ENCODE measurements at regions of chr12 and their contacts with region 1.

Region 1: DNA sequence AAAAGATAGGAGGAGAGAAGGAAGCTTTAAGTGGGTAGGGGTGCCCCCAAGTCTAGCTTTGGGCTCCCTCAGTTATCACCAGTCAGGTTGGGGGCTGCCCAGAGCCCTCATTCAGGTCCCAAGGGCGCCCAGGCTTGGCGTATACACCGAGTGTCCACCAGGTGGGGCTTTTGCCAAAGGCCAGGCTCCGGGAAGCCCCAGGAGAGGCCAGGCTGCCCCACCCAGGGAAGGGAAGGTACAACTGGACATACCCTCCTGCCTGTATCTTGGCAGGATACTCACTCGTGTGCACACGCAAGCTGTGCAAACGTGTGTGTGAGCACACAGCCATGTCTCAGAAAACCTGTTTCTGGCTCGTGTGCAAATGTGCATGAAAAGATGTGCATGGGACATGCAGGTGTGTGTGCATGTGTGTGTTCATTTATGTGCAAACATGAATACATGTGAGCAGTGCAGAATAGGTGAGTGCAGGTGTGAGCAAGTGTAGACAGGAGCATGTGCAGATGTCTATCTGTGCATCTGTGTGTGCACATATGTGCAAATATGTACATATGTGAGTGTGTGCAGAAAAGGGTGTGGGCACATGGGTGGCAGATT is 103.9 kb upstream of the MYL2 start:
- DNase-seq: peak; percentile 70
- H3K4me3 ChIP-seq: no peak overlapping the region
- H3K27ac ChIP-seq: no peak overlapping the region
- H3K4me1 ChIP-seq: no peaks in the 10 kb centered on the region
- H3K27me3 ChIP-seq: peaks cover 47% of the 10 kb centered on the region

Region 2: GRCh38 chr12:110203546-110203945 is 820.8 kb before region 1 on chr12:
- in situ Hi-C with region 1: no loop called
- DNase-seq: no peak
- H3K4me3 ChIP-seq: no peak overlapping the region
- H3K27ac ChIP-seq: no peak overlapping the region
- H3K4me1 ChIP-seq: peaks cover 21% of the 10 kb centered on the region
- H3K27me3 ChIP-seq: no peaks in the 10 kb centered on the region

Region 3: GRCh38 chr12:110224379-110225304 is 799.7 kb before region 1 on chr12:
- in situ Hi-C with region 1: no loop called
- DNase-seq: peak; percentile 92
- H3K4me3 ChIP-seq: peak overlapping the region; percentile 71
- H3K27ac ChIP-seq: peak overlapping the region; percentile 78
- H3K4me1 ChIP-seq: peaks cover 30% of the 10 kb centered on the region
- H3K27me3 ChIP-seq: no peaks in the 10 kb centered on the region

Region 4: GRCh38 chr12:111298582-111299436 is 274.5 kb after region 1 on chr12:
- in situ Hi-C with region 1: loop called (anchors 10 kb)
- DNase-seq: peak; percentile 73
- H3K4me3 ChIP-seq: no peak overlapping the region
- H3K27ac ChIP-seq: no peak overlapping the region
- H3K4me1 ChIP-seq: no peaks in the 10 kb centered on the region
- H3K27me3 ChIP-seq: peaks cover 7% of the 10 kb centered on the region; the same call in 1 of the 2 replicates